ENCODE measurements at regions of chr1 and their contacts with region 1.

Region 1: GRCh38 chr1:167454894-167455785 is 63.2 kb downstream of the CD247 start:
- DNase-seq: peak; percentile 85
- H3K4me3 Mint-ChIP-seq: peak overlapping the region; percentile 75
- H3K27ac Mint-ChIP-seq: peak overlapping the region; percentile 75
- H3K4me1 Mint-ChIP-seq: peaks cover 66% of the 10 kb centered on the region
- H3K27me3 Mint-ChIP-seq: no peaks in the 10 kb centered on the region

Region 2: DNA sequence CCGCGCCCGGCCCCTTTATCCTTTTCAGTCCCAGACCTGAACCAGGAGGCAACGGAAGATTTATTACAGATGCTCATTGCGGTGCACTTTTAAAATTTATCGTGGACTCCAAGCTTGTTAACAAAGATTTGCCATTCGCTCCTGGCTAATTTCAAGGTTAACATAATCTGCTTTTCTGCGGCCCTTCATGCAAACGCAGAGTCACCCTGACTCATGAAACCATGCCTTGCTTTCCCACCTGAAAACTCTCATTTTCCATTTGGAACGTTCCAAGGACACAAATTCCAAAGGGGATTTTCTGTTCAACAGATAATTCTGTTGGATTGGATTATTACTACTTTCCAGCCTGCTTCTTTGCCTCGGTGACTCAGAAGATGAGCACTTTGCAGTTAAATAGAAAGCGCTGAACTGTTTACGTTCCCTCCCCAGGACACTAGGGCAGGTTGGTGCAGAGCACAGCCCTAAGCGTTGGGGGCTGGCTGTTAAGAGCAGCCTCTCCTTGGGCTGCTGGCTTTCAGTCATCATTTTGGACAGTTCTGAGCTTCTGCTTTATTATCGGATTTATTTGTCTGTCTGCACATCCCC is 12.1 kb after region 1 on chr1:
- CTCF ChIA-PET with region 1: interaction called, 9 read pairs
- POLR2A ChIA-PET with region 1: interaction called, 26 read pairs
- DNase-seq: no peak
- H3K4me3 Mint-ChIP-seq: no peak overlapping the region
- H3K27ac Mint-ChIP-seq: no peak overlapping the region
- H3K4me1 Mint-ChIP-seq: peaks cover 44% of the 10 kb centered on the region
- H3K27me3 Mint-ChIP-seq: no peaks in the 10 kb centered on the region

Region 3: DNA sequence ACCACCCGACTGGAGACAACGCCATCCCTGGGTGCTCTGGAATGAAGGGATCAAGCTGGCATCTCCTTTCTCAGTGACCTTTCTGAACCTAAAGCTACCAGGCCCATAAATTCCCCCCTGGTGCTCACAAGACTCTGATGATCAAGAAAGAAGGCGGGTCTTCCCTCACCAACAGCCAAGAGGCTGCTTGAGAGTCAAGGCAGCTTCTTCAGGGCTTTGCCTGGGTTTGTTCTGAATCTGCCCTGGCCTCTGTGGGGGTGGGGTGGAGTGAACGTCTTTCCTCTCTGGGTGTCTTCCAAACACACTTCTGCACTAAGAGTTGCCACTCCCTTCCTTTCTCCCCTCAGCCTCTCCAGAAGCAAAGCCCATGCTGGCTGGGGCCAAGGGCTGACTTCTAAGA is 27.0 kb after region 1 on chr1:
- CTCF ChIA-PET with region 1: interaction called, 6 read pairs
- POLR2A ChIA-PET with region 1: interaction called, 50 read pairs
- DNase-seq: peak; percentile 61
- H3K4me3 Mint-ChIP-seq: no peak overlapping the region
- H3K27ac Mint-ChIP-seq: peak overlapping the region; percentile 87
- H3K4me1 Mint-ChIP-seq: peaks cover 92% of the 10 kb centered on the region
- H3K27me3 Mint-ChIP-seq: no peaks in the 10 kb centered on the region

Region 4: GRCh38 chr1:167499664-167500101 is 44.5 kb after region 1 on chr1:
- CTCF ChIA-PET with region 1: interaction called, 6 read pairs
- POLR2A ChIA-PET with region 1: interaction called, 46 read pairs
- DNase-seq: peak; percentile 41
- H3K4me3 Mint-ChIP-seq: peak overlapping the region; percentile 5
- H3K27ac Mint-ChIP-seq: peak overlapping the region; percentile 86
- H3K4me1 Mint-ChIP-seq: peaks cover 96% of the 10 kb centered on the region
- H3K27me3 Mint-ChIP-seq: no peaks in the 10 kb centered on the region

Measured in activated CD4-positive, alpha-beta memory T cell treated with anti-CD3 and anti-CD28 coated beads, Interleukin-2, amount 10 ng/mL, durations not matched to agents 7 days and 5 days (primary cell).